AG04450 (cell line): ENCODE measurements at regions of chr11 and their contacts with region 1.

Region 1: DNA sequence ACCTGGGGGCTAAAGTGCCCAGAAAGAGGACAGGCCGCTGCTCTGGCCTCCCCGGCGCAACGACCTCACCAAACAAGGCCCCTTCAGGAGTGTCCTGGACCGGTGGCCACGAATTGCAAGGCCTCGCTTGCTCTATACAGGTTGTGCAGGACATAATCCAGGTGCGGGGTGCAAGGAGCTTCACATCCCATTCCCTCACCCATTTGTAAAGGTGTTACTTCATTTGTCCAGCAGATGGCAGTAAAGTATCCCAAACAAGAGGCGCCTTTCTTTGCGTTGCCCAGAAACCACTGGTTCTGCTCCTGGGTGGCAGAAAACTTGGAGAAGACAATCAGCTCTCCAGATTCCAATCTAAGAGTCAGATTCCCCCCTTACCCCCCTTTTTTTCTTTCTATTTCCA is 35.9 kb upstream of the PRDM11 start:
- DNase-seq: peak; percentile 57
- H3K4me3 ChIP-seq: no peak overlapping the region
- H3K27ac ChIP-seq: no peak overlapping the region
- H3K27me3 ChIP-seq: peaks cover 32% of the 10 kb centered on the region
- CTCF ChIP-seq: peak; percentile 78

Region 2: DNA sequence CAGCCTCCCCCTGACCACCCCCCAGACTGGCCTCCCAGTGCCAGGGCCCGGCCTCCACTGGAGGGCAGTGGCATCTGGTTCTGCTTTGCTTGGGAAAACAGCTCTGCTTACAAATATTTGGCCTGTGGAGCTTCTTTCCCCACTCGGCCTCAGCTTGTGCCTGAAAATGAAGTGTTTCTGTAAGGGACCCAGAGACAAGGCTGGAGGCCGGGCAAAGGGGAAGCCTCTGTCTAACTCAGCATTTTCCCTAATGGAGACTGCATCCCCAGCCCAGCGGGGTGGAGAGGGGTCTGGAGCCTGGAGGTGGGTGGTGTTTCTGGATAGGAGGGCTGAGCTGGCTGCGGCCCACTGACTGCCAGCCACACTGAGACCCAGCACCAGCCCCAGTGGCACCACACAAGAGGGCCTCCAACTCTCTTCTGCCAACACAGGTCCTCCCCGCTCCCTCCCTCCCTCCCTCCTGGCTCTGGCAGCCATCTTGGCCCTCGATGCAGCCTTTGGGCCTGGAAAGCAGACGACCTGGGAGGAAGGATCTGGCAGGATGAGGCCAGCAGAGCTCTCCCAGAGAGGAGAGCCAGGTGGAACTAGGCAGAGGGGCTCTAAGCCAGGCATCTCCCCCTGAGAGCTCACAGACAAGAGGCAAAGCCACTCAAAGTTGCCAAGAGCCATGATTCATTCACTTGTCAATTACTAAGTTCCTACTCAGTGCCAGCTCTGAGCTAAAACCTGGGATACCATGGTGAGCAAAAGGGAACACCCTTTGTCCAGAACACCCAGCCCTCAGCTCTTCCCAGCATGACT is 622.2 kb before region 1 on chr11:
- CTCF ChIA-PET with region 1: interaction called, 10 read pairs
- POLR2A ChIA-PET with region 1: no interaction called
- DNase-seq: no peak
- H3K4me3 ChIP-seq: no peak overlapping the region
- H3K27ac ChIP-seq: no peak overlapping the region
- H3K27me3 ChIP-seq: peaks cover 14% of the 10 kb centered on the region
- CTCF ChIP-seq: no peak

Region 3: GRCh38 chr11:45097721-45098493 is 12.7 kb before region 1 on chr11:
- CTCF ChIA-PET with region 1: interaction called, 12 read pairs
- POLR2A ChIA-PET with region 1: no interaction called
- DNase-seq: no peak
- H3K4me3 ChIP-seq: no peak overlapping the region
- H3K27ac ChIP-seq: no peak overlapping the region
- H3K27me3 ChIP-seq: peaks cover 41% of the 10 kb centered on the region
- CTCF ChIP-seq: no peak

Region 4: GRCh38 chr11:45252134-45252855 is 141.7 kb after region 1 on chr11:
- CTCF ChIA-PET with region 1: interaction called, 15 read pairs
- POLR2A ChIA-PET with region 1: no interaction called
- DNase-seq: no peak
- H3K4me3 ChIP-seq: no peak overlapping the region
- H3K27ac ChIP-seq: no peak overlapping the region
- H3K27me3 ChIP-seq: peaks cover 7% of the 10 kb centered on the region
- CTCF ChIP-seq: peak; percentile 53

Region 5: GRCh38 chr11:45294499-45294898 is 183.9 kb after region 1 on chr11:
- CTCF ChIA-PET with region 1: interaction called, 113 read pairs
- POLR2A ChIA-PET with region 1: no interaction called
- DNase-seq: no peak
- H3K4me3 ChIP-seq: no peak overlapping the region
- H3K27ac ChIP-seq: no peak overlapping the region
- H3K27me3 ChIP-seq: peaks cover 21% of the 10 kb centered on the region
- CTCF ChIP-seq: no peak

Region 6: GRCh38 chr11:45332276-45332934 is 221.8 kb after region 1 on chr11:
- CTCF ChIA-PET with region 1: interaction called, 87 read pairs
- POLR2A ChIA-PET with region 1: no interaction called
- DNase-seq: no peak
- H3K4me3 ChIP-seq: no peak overlapping the region
- H3K27ac ChIP-seq: no peak overlapping the region
- H3K27me3 ChIP-seq: peaks cover 6% of the 10 kb centered on the region
- CTCF ChIP-seq: peak; percentile 60